Activated CD4-positive, alpha-beta T cell treated with anti-CD3 and anti-CD28 coated beads for 36 hours (primary cell): ENCODE measurements at regions of chr19 and their contacts with region 1.

Region 1: GRCh38 chr19:40603389-40604135 is 2.4 kb downstream of the LTBP4 start:
- DNase-seq: peak; percentile 99
- ATAC-seq: peak; percentile 80
- H3K4me3 Mint-ChIP-seq: peak overlapping the region; percentile 52
- H3K27ac Mint-ChIP-seq: no peak overlapping the region
- H3K4me1 Mint-ChIP-seq: peaks cover 66% of the 10 kb centered on the region
- H3K27me3 Mint-ChIP-seq: peaks cover 22% of the 10 kb centered on the region

Region 2: DNA sequence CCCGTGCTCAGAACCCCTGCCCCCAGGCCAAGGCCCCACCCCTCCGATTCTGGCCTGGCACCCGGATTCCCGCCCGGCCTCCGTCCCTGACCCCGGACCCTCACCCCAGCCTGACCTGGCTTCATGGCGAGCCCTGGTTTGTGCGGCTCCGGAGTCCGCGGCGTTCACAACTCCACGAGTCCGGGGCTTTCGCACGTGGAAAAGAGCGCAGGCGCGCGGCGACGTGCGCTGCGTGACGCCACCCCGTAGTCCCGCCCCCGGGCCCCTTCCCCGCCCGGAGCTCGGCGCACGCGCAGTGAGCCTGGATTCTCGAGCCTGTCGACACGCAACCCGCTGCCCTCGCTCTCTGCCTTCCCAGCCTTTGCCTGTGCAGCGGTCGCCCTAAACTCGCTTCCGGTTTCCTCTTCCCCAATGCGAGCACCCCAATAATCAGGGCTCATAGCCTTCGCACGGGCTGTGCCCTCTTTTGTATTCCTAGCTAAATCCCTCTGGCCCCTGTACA is 757.3 kb before region 1 on chr19 and contains the start of gene FBL:
- CTCF ChIA-PET with region 1: no interaction called
- POLR2A ChIA-PET with region 1: no interaction called
- intact Hi-C with region 1: loop called in 1 of 2 experiments (anchors 10 kb)
- DNase-seq: peak; percentile 99
- ATAC-seq: peak; percentile 88
- H3K4me3 Mint-ChIP-seq: peak within 1 kb of the TSS; percentile 96
- H3K27ac Mint-ChIP-seq: peak within 1 kb of the TSS; percentile 94
- H3K4me1 Mint-ChIP-seq: peaks cover 48% of the 10 kb centered on the region
- H3K27me3 Mint-ChIP-seq: no peaks in the 10 kb centered on the region
- total RNA-seq, gene FBL: 742 to 890 TPM

Region 3: GRCh38 chr19:40425450-40426287 is 177.9 kb before region 1 on chr19 and contains the start of gene SERTAD1:
- CTCF ChIA-PET with region 1: no interaction called
- POLR2A ChIA-PET with region 1: no interaction called
- intact Hi-C with region 1: loop called (anchors 2 kb)
- DNase-seq: peak; percentile 100
- ATAC-seq: peak; percentile 91
- H3K4me3 Mint-ChIP-seq: peak within 1 kb of the TSS; percentile 89
- H3K27ac Mint-ChIP-seq: peak within 1 kb of the TSS; percentile 96
- H3K4me1 Mint-ChIP-seq: peaks cover 20% of the 10 kb centered on the region
- H3K27me3 Mint-ChIP-seq: no peaks in the 10 kb centered on the region
- total RNA-seq, gene SERTAD1: 10.0 to 14.7 TPM

Region 4: GRCh38 chr19:40570313-40571004 is 33.1 kb before region 1 on chr19:
- CTCF ChIA-PET with region 1: interaction called, 3 read pairs
- POLR2A ChIA-PET with region 1: interaction called, 4 read pairs
- intact Hi-C with region 1: loop called (anchors 1 to 2 kb)
- DNase-seq: peak; percentile 97
- ATAC-seq: peak; percentile 94
- H3K4me3 Mint-ChIP-seq: peak overlapping the region; percentile 50
- H3K27ac Mint-ChIP-seq: peak overlapping the region; percentile 7
- H3K4me1 Mint-ChIP-seq: peaks cover 12% of the 10 kb centered on the region
- H3K27me3 Mint-ChIP-seq: peaks cover 19% of the 10 kb centered on the region

Region 5: GRCh38 chr19:40640744-40641143 is 37.2 kb after region 1 on chr19:
- CTCF ChIA-PET with region 1: interaction called, 3 read pairs
- POLR2A ChIA-PET with region 1: no interaction called
- intact Hi-C with region 1: loop called in 1 of 2 experiments (anchors 2 kb)
- DNase-seq: no peak
- ATAC-seq: no peak
- H3K4me3 Mint-ChIP-seq: no peak overlapping the region
- H3K27ac Mint-ChIP-seq: no peak overlapping the region
- H3K4me1 Mint-ChIP-seq: peaks cover 5% of the 10 kb centered on the region
- H3K27me3 Mint-ChIP-seq: peaks cover 1% of the 10 kb centered on the region

Region 6: DNA sequence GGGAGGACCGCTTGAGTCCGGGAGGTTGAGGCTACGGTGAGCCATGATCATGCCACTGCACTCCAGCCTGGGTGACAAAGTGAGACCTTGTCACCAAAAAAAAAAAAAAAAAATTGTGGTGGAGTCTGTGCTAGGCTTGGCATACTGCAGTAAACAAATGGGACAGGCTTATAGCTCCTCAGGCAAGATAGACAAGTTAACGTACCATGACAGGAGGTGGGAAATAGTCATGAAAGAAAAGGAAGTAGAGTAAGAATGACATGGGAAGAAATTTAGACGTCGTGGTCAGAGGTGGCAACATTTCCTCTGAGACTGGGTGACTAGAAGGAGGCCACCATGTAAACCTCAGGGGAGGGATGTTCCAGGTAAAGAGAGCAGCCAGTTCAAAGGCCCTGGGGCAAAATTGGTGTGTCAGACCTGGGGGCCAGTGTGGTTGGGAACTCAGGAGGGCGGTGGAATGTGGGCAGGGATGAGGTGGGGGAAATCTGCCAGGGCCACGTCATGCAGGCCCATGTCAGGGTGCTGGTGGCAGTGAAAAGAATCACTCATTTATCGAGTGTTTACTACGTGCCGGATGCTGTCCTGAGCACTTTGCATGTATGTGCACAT is 153.0 kb after region 1 on chr19:
- CTCF ChIA-PET with region 1: no interaction called
- POLR2A ChIA-PET with region 1: no interaction called
- intact Hi-C with region 1: no loop called
- DNase-seq: peak; percentile 62
- ATAC-seq: peak; percentile 28
- H3K4me3 Mint-ChIP-seq: peak overlapping the region; percentile 18
- H3K27ac Mint-ChIP-seq: peak overlapping the region; percentile 69
- H3K4me1 Mint-ChIP-seq: peaks cover 58% of the 10 kb centered on the region
- H3K27me3 Mint-ChIP-seq: no peaks in the 10 kb centered on the region

Region 7: DNA sequence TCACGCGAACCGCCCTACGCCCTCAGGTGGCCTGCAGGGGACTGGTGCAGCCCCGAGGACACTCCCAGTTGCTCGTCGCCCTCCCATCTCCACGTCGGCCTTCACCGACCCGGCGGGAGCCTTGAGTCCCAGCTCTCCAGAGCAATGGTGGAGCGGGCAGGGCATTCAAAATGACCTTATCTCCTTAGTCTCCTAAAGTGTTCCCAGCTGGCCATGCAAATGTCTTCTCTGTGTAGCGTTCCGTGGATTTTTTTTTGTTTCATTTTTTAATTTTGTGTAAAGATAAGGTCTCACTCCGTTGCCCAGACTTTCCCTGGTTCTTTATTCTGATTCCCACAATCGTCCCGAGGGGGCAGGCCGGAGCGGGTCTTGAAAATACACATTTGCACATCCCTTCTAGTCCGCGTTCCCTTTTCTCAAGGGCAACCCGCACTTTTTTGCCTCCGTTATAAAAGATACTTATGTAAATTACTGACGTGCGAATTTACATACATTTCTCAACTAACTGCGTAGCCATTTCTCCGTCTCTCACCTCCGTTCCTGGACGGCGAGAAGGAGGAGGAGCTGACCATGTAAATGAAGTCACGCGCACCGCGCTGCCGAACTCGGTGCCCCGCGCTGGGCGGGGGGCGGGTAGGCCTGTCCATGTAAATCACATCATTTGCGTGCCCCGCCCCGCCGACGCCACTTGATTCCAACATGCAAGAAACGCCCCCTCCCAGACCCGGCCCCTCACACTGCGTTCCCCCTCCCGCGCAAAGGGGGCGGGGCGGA is 194.8 kb after region 1 on chr19:
- CTCF ChIA-PET with region 1: interaction called, 3 read pairs
- POLR2A ChIA-PET with region 1: no interaction called
- intact Hi-C with region 1: loop called in 1 of 2 experiments (anchors 2 kb)
- DNase-seq: peak; percentile 100
- ATAC-seq: peak; percentile 82
- H3K4me3 Mint-ChIP-seq: peak overlapping the region; percentile 91
- H3K27ac Mint-ChIP-seq: peak overlapping the region; percentile 97
- H3K4me1 Mint-ChIP-seq: peaks cover 49% of the 10 kb centered on the region
- H3K27me3 Mint-ChIP-seq: no peaks in the 10 kb centered on the region

Region 8: DNA sequence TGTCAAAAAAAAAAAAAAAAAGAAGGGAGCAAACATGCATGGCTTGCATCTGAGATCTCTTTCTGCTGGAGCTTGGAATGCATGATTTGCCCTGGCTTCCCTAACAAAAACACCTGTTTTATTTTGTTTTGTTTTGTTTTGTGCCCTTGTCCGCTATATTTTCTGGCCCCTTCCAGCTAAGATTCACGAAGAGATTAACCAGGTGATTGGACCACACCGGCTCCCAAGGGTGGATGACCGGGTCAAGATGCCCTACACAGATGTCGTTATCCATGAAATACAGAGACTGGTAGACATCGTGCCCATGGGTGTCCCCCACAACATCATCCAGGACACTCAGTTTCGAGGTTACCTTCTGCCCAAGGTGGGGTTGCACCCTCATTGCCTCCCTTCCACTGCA is 294.4 kb after region 1 on chr19:
- CTCF ChIA-PET with region 1: no interaction called
- POLR2A ChIA-PET with region 1: no interaction called
- intact Hi-C with region 1: no loop called
- DNase-seq: no peak
- ATAC-seq: no peak
- H3K4me3 Mint-ChIP-seq: no peak overlapping the region
- H3K27ac Mint-ChIP-seq: no peak overlapping the region
- H3K4me1 Mint-ChIP-seq: peaks cover 19% of the 10 kb centered on the region
- H3K27me3 Mint-ChIP-seq: peaks cover 4% of the 10 kb centered on the region